ENCODE measurements at regions of chr16 and their contacts with region 1.

Region 1: GRCh38 chr16:89507834-89508590 is at the start of gene SPG7:
- DNase-seq: peak; percentile 51
- ATAC-seq: peak; percentile 87
- H3K4me3 ChIP-seq: peak within 1 kb of the TSS; percentile 96
- H3K27ac ChIP-seq: peak within 1 kb of the TSS; percentile 80
- H3K4me1 ChIP-seq: peaks cover 21% of the 10 kb centered on the region
- H3K27me3 ChIP-seq: no peaks in the 10 kb centered on the region
- CTCF ChIP-seq: no peak
- EP300 ChIP-seq: no peak
- POLR2A ChIP-seq: peak; percentile 85
- RAD21 ChIP-seq: no peak
- polyA plus RNA-seq, gene SPG7: 5.9 to 9.8 TPM

Region 2: DNA sequence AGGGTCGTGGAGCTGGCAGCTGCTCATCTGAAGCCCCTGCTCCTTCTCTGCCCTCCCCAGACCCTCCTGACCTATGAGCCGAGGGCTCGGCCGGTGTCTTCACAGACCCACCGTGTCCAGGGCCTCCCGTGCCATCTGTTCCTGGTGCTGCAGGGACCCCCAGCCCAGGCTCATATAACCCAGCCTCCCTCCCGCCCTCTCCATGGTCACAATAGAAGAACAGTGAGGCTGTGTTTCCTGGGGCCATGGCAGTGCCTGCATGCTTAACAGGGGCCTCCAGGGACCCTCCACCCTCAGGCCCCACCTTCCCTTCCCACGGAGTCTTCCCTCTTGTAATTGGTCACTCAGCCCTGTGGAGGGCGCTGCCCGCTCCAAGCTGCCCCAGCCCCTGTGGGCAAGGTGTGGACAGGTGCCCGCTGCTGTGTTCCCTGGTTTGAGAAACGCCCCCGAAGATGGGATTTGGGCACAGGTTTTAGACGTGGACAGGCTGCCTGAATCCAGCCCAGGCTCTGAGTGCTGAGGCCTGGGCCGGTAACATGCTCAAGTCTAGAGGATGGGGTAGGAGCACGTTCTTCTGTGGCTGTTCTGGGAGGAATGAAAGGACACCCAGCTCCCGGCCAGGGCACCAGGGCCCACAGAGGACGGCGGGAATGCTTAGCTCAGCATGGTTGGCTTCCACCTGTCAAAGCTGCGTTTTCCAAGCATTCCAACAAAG is 375.6 kb before region 1 on chr16:
- CTCF ChIA-PET with region 1: no interaction called
- POLR2A ChIA-PET with region 1: no interaction called
- RAD21 ChIA-PET with region 1: no interaction called
- SMC1A ChIA-PET with region 1: no interaction called
- in situ Hi-C with region 1: no loop called
- intact Hi-C with region 1: no loop called
- DNase-seq: no peak
- ATAC-seq: no peak
- H3K4me3 ChIP-seq: no peak overlapping the region
- H3K27ac ChIP-seq: no peak overlapping the region
- H3K4me1 ChIP-seq: 0 out of 2 replicates have a peak, but pooled peaks cover 4% of the 10 kb centered on the region
- H3K27me3 ChIP-seq: no peaks in the 10 kb centered on the region
- CTCF ChIP-seq: 0 out of 6 replicates have a peak, but pooled peaks of 1 of the 3 experiments have one; percentile 4
- EP300 ChIP-seq: no peak
- POLR2A ChIP-seq: no peak
- RAD21 ChIP-seq: no peak

Region 3: DNA sequence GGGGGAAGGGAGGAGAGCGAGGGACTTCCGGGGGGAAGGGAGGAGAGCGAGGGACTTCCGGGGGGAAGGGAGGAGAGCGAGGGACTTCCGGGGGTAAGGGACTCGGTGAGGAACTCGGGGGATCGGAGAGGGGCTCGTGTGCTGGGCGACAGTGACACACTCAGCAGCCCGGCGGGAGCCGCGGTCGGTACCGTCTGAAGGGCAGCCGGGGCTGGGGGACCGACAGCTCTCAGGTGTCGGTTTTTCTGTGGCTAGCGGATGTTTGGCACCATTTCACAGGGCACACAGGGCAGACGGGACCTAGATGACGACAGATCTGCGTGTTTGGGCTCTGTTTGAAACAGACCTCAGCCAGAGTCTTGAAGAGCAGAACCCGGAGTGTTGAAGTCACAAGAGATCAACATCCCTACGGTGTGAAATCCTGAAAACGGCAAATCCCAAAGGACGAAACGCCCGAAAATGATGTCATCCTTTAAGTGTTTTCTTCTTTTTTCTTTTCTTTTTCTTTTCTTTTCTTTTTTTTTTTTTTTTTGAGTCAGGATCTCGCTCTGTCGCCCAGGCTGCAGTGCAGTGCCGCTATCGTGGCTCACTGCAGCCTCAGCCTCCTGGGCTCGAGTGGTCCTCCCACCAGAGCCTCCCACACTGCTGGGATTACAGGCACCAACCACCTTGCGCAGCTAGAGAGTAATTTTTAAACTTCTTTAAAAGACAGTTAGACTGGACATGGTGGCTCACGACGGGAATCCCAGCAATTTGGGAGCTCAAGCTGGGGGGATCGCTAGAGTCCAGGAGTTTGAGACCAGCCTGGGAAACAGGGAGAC is 266.6 kb before region 1 on chr16:
- CTCF ChIA-PET with region 1: interaction called, 9 read pairs
- POLR2A ChIA-PET with region 1: no interaction called
- RAD21 ChIA-PET with region 1: no interaction called
- SMC1A ChIA-PET with region 1: interaction called, 3 read pairs
- in situ Hi-C with region 1: no loop called
- intact Hi-C with region 1: loop called (anchors 5 kb)
- DNase-seq: peak; percentile 57
- ATAC-seq: peak; percentile 86
- H3K4me3 ChIP-seq: peak overlapping the region; percentile 72
- H3K27ac ChIP-seq: peak overlapping the region; percentile 96
- H3K4me1 ChIP-seq: no peaks in the 10 kb centered on the region; the same call in 1 of the 2 replicates
- H3K27me3 ChIP-seq: no peaks in the 10 kb centered on the region
- CTCF ChIP-seq: no peak
- EP300 ChIP-seq: no peak
- POLR2A ChIP-seq: peak; percentile 94
- RAD21 ChIP-seq: no peak

Region 4: DNA sequence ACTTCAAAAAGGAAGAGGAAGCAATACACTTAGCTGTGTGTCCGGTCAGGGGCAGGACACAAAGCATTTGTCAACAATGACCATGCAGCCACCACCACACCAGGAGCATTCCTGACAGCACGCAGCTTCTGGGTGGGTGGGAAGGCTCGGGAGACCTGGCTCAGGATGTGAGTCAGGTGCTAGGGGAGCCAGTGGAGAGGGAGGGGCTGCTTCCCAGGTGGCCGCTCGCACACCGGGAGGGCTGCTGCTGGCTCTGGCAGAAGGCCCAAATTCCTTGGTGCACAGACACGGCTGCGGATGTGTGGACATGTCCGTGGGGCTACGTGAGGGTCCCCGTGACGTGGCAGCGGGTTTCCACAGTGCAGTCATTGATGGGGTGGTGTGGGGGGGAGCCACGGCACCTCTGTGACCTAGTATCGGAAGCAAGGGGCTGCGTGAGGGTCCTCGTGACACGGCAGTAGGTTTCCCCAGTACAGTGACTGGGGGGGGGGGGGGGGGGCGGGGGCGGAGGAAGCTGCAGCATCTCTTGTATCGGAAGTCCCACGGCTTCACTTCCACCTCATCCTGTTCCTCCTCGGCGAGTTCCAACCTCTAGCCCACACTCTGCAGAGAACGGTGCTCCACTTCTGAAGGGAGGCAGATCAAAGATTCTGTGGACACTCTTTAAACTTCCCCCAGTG is 177.7 kb before region 1 on chr16:
- CTCF ChIA-PET with region 1: interaction called, 7 read pairs
- POLR2A ChIA-PET with region 1: interaction called, 3 read pairs
- RAD21 ChIA-PET with region 1: interaction called, 6 read pairs
- SMC1A ChIA-PET with region 1: no interaction called
- in situ Hi-C with region 1: no loop called
- intact Hi-C with region 1: loop called (anchors 5 kb)
- DNase-seq: no peak
- ATAC-seq: no peak
- H3K4me3 ChIP-seq: no peak overlapping the region
- H3K27ac ChIP-seq: no peak overlapping the region
- H3K4me1 ChIP-seq: peaks cover 39% of the 10 kb centered on the region
- H3K27me3 ChIP-seq: no peaks in the 10 kb centered on the region
- CTCF ChIP-seq: no peak
- EP300 ChIP-seq: no peak
- POLR2A ChIP-seq: peak; percentile 35; the same call in 1 of the 2 replicates
- RAD21 ChIP-seq: no peak